ENCODE measurements at regions of chr16 and their contacts with region 1.

Region 1: DNA sequence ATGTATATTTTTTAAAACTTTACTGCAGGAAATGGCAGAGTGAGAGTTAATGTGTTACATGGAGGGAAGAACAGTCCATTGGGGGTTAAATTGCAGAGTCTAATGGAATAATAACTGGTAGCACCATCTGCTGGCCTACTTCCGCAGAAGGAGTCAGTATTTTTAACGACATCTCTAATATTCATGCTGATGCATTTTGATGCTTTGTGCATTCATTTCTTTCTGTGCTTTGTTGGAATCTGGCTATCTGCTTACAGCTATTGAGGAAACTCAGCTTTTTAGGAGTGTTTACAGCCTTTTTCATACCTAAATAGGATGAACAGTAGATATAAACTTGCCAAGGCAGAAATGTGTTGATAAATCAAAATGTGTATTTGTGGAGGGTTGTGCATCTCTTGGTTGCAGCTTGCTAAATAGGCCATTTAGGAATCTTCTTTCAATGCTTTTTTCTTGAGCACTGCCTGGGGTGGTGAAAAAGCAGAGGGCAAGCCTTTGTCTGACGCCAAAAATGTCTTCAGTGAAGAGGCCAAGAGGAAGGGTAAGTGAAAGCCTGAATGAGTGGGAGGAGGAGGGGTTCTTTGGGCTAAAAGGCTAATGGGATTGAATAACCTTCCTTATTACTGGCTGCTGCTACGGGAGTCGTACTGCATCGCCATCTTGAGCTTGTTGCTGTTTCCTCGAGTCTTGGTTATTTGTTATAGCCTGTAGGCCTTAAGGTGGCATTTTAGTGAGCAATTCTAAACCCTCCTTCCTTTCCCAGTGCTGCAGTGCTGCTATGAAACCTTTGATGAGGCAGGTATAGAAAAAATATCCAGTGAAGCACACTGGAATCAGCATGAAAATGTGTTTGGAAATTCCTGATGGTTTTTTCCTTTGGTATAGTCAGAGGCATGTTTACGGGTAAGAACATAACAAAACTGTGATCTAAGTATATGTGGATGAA is 153.3 kb downstream of the CHD9 start:
- DNase-seq: no peak
- ATAC-seq: peak; percentile 81
- H3K4me3 Mint-ChIP-seq: peak overlapping the region; percentile 88
- H3K27ac Mint-ChIP-seq: peak overlapping the region; percentile 97
- H3K4me1 Mint-ChIP-seq: peaks cover 32% of the 10 kb centered on the region
- H3K27me3 Mint-ChIP-seq: no peaks in the 10 kb centered on the region
- CTCF ChIP-seq: no peak

Region 2: DNA sequence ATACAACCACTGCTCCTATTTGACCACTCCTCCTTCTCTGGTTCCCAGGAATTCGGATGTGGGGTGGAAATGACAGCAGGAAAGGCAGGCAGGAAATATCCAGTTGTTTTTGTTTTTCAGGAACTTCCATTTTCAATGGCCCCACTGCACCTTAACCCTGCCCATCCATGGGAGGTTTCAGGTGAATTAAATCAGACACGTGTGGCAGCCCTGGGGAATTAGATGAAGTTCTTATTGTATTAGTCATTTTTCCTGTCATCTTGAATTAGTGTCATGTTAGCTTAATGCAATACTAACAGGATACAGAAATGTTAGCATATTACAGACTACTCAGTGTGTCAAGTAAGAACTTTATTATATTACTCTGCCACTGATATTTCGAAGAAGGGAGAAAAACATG is 301.8 kb before region 1 on chr16:
- CTCF ChIA-PET with region 1: no interaction called
- POLR2A ChIA-PET with region 1: no interaction called
- intact Hi-C with region 1: no loop called
- DNase-seq: no peak
- ATAC-seq: no peak
- H3K4me3 Mint-ChIP-seq: no peak overlapping the region
- H3K27ac Mint-ChIP-seq: no peak overlapping the region
- H3K4me1 Mint-ChIP-seq: no peaks in the 10 kb centered on the region
- H3K27me3 Mint-ChIP-seq: peaks cover 3% of the 10 kb centered on the region
- CTCF ChIP-seq: no peak

Region 3: DNA sequence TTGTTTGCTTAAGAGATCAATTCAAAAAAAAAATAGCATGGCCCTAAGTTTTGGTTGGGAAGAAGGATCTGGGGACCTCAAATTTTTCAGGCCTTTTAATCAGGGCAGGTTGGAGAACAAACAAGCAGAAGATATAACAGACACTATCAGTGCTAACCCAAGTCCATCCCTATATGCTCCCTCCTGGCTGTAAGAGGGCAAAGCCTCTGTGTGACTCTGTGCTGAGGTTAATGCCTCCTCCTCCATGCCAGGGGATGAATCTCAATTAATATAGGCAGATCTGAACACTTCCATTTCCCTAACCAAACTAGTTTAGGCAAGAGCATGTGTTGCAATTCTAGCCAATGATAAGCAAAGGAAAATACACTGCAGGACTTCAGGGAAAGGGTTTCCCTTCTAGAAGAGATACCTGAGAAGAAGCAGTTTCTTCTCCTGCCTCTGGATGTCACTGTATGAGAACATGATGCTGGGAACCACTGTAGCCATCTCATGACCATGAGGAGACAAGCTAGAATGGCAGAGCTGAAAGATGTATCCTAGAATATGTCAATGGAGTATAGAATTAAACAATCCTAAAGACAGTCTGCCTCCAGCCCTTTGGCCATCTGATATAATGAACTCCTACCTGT is 231.4 kb before region 1 on chr16:
- CTCF ChIA-PET with region 1: interaction called, 5 read pairs
- POLR2A ChIA-PET with region 1: no interaction called
- intact Hi-C with region 1: loop called (anchors 5 kb)
- DNase-seq: no peak
- ATAC-seq: no peak
- H3K4me3 Mint-ChIP-seq: no peak overlapping the region
- H3K27ac Mint-ChIP-seq: no peak overlapping the region
- H3K4me1 Mint-ChIP-seq: no peaks in the 10 kb centered on the region
- H3K27me3 Mint-ChIP-seq: peaks cover 46% of the 10 kb centered on the region
- CTCF ChIP-seq: no peak

Region 4: DNA sequence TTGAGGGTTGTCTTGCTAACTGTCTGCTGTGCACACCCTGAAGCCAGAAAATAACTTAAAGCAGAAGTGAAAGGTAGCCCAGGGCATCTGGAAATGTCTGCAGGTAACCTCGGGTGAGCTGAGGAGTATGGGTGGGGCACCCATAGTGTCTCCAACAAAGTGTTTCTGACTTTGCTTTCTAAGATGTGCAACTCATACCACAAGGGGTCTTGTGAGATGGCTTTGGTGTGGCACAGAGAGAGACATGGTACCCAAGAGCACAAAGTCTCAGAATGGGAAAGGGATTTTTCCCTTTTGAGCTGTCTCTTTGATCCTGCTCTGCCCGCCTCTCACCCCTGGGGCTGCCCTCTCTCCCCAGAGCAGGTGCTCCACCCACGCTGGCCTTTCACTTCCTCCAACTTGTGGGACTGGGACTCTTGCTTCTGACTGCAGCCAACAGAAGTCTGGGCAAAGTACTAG is 146.4 kb before region 1 on chr16:
- CTCF ChIA-PET with region 1: interaction called, 50 read pairs
- POLR2A ChIA-PET with region 1: interaction called, 4 read pairs
- intact Hi-C with region 1: no loop called
- DNase-seq: peak; percentile 65
- ATAC-seq: peak; percentile 82
- H3K4me3 Mint-ChIP-seq: peak overlapping the region; percentile 65
- H3K27ac Mint-ChIP-seq: peak overlapping the region; percentile 82
- H3K4me1 Mint-ChIP-seq: peaks cover 88% of the 10 kb centered on the region
- H3K27me3 Mint-ChIP-seq: no peaks in the 10 kb centered on the region
- CTCF ChIP-seq: no peak

Region 5: GRCh38 chr16:53159781-53160436 is 48.2 kb before region 1 on chr16:
- CTCF ChIA-PET with region 1: interaction called, 5 read pairs
- POLR2A ChIA-PET with region 1: no interaction called
- intact Hi-C with region 1: loop called (anchors 2 kb)
- DNase-seq: no peak
- ATAC-seq: peak; percentile 81
- H3K4me3 Mint-ChIP-seq: no peak overlapping the region
- H3K27ac Mint-ChIP-seq: peak overlapping the region; percentile 18
- H3K4me1 Mint-ChIP-seq: peaks cover 4% of the 10 kb centered on the region
- H3K27me3 Mint-ChIP-seq: no peaks in the 10 kb centered on the region
- CTCF ChIP-seq: peak; percentile 88

Region 6: DNA sequence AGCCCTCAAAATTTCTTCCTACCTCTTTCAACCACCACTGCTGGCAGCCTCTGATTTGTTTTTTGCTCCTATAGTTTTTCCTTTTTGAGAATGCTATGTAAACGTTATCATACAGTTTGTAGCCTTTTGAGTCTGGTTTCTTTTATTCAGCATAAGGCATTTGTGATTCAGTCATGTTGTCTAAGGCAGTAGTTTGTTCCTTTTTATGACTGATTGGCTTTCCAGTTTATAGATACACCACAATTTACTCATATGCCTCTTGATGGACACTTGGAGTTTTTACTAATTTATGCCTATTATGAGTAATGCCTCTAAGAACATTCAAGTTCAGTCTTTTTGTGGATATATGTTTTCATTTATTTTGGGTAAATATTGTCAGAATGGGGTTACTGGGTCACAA is 16.7 kb before region 1 on chr16:
- CTCF ChIA-PET with region 1: no interaction called
- POLR2A ChIA-PET with region 1: no interaction called
- intact Hi-C with region 1: no loop called
- DNase-seq: no peak
- ATAC-seq: no peak
- H3K4me3 Mint-ChIP-seq: no peak overlapping the region
- H3K27ac Mint-ChIP-seq: no peak overlapping the region
- H3K4me1 Mint-ChIP-seq: no peaks in the 10 kb centered on the region
- H3K27me3 Mint-ChIP-seq: no peaks in the 10 kb centered on the region
- CTCF ChIP-seq: no peak

Region 7: GRCh38 chr16:53220585-53220984 is 12.5 kb after region 1 on chr16:
- CTCF ChIA-PET with region 1: interaction called, 6 read pairs
- POLR2A ChIA-PET with region 1: interaction called, 4 read pairs
- intact Hi-C with region 1: loop called (anchors 2 kb)
- DNase-seq: no peak
- ATAC-seq: peak; percentile 60
- H3K4me3 Mint-ChIP-seq: no peak overlapping the region
- H3K27ac Mint-ChIP-seq: no peak overlapping the region
- H3K4me1 Mint-ChIP-seq: peaks cover 14% of the 10 kb centered on the region
- H3K27me3 Mint-ChIP-seq: no peaks in the 10 kb centered on the region
- CTCF ChIP-seq: no peak

Region 8: DNA sequence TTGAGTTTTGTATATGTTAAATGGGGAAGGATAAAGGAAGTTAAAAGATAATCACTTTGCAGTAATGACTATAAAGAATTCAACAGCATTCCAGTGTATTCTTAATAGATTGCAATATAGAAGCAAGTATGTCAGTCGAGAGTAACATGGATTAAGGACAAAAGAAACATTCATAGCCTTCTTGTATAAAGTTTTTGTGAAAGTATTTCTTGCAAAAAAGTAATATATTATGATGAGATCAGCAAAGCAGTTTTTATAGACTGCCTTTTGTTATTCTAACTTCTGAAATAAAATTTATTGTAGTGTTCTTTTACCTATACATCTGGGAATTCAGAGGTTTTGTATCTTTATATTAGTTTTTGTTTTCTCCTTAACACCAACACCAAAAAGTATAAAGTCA is 41.2 kb after region 1 on chr16:
- CTCF ChIA-PET with region 1: no interaction called
- POLR2A ChIA-PET with region 1: no interaction called
- intact Hi-C with region 1: no loop called
- DNase-seq: no peak
- ATAC-seq: no peak
- H3K4me3 Mint-ChIP-seq: no peak overlapping the region
- H3K27ac Mint-ChIP-seq: no peak overlapping the region
- H3K4me1 Mint-ChIP-seq: no peaks in the 10 kb centered on the region
- H3K27me3 Mint-ChIP-seq: no peaks in the 10 kb centered on the region
- CTCF ChIP-seq: no peak

Region 9: DNA sequence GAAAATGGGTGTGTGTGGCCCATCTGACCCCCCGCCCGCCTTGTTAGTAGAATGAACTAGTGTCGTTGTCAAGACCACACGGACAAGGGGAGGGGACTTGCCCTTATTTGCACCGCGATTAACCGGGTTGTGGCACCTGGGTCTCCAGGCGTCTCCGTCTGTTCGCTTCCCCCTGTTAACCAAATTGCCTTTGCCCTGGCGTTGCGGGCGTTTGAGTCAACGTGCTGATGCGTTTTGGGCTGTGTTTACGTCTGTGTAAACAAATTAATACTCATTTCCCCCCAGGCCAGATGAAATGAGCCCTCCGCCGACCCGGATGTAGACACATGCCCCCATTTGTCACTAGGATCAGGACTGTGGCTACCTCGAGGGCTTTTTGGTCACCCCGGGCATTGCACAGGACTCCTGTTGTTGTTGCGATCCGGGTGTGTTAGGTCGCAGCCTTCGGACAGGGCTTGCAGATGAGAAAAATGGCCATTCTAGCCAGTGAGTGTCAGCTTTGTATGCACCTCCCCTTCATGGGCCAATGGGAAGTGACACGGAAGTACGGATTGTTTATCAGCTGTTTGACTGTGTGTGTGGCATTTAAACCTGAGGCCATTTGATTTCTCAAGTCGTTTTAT is 227.1 kb after region 1 on chr16:
- CTCF ChIA-PET with region 1: no interaction called
- POLR2A ChIA-PET with region 1: no interaction called
- intact Hi-C with region 1: loop called (anchors 5 kb)
- DNase-seq: peak; percentile 52
- ATAC-seq: peak; percentile 67
- H3K4me3 Mint-ChIP-seq: peak overlapping the region; percentile 89
- H3K27ac Mint-ChIP-seq: peak overlapping the region; percentile 93
- H3K4me1 Mint-ChIP-seq: peaks cover 34% of the 10 kb centered on the region
- H3K27me3 Mint-ChIP-seq: no peaks in the 10 kb centered on the region
- CTCF ChIP-seq: no peak

Measured in activated B cell treated with CpG ODN at 0.5 μM for 24 hours (primary cell).